ENCODE measurements at regions of chr2 and their contacts with region 1.

Region 1: DNA sequence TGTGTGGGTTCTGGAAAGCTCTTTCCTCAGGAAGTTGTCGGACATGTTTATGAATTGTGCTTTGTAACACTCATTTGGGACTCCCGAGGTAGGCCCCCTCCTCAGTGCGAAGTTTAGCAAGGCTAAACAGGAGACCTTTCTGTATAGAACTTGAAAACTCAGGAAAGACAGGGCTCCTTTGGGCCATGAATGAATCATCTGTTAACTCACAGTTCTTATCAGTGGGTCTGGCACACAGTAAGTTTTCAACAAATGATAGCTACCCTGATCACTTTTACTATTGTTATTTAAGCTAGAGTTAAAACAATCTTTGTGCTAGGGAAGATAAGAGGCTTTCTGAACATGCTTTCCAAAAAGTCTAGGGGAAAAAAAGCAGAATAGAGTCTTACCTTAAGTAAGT is 430.5 kb upstream of the ETAA1 start:
- DNase-seq: no peak
- H3K4me3 ChIP-seq: no peak overlapping the region
- H3K27ac ChIP-seq: no peak overlapping the region
- H3K4me1 ChIP-seq: no peaks in the 10 kb centered on the region
- H3K27me3 ChIP-seq: no peaks in the 10 kb centered on the region
- CTCF ChIP-seq: no peak
- POLR2A ChIP-seq: no peak

Region 2: DNA sequence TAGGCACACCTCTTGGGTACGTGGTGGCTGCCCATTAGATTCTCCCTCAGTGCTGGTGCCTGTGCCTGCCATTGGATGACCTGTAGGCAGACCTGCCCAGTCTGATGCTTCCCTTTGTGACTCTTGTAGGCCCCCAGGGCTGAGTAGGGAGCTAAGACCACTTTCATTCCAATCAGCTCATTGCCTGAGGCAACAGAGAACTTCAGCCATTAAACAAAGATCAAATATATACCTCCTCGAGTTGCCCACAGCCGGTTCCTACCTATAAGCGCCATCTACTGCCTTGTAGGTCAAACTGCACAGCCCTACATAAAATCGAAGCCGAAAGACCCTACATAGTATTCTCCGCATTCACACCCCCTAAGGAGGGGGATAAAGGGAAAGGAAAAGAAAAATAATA is 615.1 kb after region 1 on chr2:
- intact Hi-C with region 1: no loop called
- DNase-seq: no peak
- H3K4me3 ChIP-seq: no peak overlapping the region
- H3K27ac ChIP-seq: no peak overlapping the region
- H3K4me1 ChIP-seq: no peaks in the 10 kb centered on the region
- H3K27me3 ChIP-seq: no peaks in the 10 kb centered on the region
- CTCF ChIP-seq: no peak
- POLR2A ChIP-seq: no peak

Region 3: DNA sequence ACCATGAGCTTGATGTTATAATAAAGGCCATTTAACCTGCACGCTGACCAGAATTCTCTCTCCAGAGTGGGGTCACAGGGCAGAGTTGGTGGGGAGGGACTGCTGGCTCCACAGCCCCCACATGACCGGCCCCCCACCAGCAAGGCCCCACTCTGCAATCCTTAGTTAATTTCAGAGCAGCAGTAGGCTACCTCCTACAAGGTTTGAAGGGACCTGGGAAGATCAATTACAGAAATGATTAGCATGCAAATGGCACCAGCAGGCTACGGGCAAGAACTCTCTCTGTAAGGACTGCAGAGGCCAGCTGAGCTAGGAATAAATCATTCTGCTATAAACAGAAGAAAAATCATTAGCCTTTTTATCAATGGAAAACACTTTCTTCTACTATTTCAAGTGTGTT is 960.9 kb after region 1 on chr2:
- intact Hi-C with region 1: loop called (anchors 5 kb)
- DNase-seq: no peak
- H3K4me3 ChIP-seq: no peak overlapping the region
- H3K27ac ChIP-seq: no peak overlapping the region
- H3K4me1 ChIP-seq: no peaks in the 10 kb centered on the region
- H3K27me3 ChIP-seq: no peaks in the 10 kb centered on the region
- CTCF ChIP-seq: no peak
- POLR2A ChIP-seq: no peak

Measured in breast epithelium (tissue), 4 donors.